Mammary epithelial cell (primary cell): ENCODE measurements at regions of chr10 and their contacts with region 1.

Region 1: DNA sequence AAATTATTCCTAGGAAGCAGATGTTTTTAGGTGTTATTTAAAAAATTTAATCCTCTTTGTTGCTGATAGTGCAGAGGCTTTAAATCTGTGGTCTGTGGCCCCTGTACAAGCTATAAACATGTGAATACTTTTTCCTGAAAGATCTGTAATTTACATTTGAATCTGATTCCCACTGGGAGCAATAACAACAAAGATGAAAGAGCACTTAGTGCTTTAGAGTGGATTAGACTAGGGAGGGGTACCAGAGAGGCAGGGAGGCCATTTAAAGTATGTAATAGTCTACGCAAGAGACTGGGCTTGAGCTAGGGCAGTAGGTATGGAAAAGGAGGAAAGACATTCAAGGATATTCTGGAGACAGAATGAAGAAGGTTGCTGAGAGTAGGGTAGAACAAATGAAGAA is 19.1 kb downstream of the BTRC start:
- DNase-seq: no peak
- H3K4me3 ChIP-seq: no peak overlapping the region
- H3K27ac ChIP-seq: no peak overlapping the region
- H3K4me1 ChIP-seq: peaks cover 2% of the 10 kb centered on the region
- H3K27me3 ChIP-seq: no peaks in the 10 kb centered on the region
- CTCF ChIP-seq: no peak

Region 2: GRCh38 chr10:101120884-101121653 is 252.0 kb before region 1 on chr10:
- CTCF ChIA-PET with region 1: no interaction called
- dilution Hi-C with region 1: no loop called
- in situ Hi-C with region 1: no loop called
- intact Hi-C with region 1: no loop called
- DNase-seq: no peak
- H3K4me3 ChIP-seq: peak overlapping the region; percentile 1 to 34 (median 32)
- H3K27ac ChIP-seq: no peak overlapping the region
- H3K4me1 ChIP-seq: peaks cover 26% of the 10 kb centered on the region
- H3K27me3 ChIP-seq: peaks cover 28% of the 10 kb centered on the region
- CTCF ChIP-seq: no peak

Region 3: DNA sequence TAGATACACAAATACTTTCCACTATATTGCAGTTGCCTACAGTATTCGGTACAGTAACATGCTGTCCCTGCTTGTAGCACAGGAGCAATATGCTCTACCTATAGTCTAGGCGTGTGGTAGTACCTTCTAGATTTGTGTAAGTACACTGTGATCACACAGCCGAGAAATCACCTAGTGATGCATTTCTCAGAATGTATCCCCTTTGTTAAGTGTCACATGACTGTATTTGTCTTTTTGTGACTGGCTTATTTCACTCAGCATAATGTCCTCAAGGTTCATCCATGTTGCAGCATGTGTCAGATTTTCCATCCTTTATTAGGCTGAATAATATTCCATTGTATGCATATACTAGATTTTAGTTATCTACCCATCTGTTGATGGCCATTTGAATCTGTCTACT is 42.8 kb after region 1 on chr10:
- CTCF ChIA-PET with region 1: no interaction called
- dilution Hi-C with region 1: loop called (anchors 5 kb)
- in situ Hi-C with region 1: no loop called
- intact Hi-C with region 1: no loop called
- DNase-seq: no peak
- H3K4me3 ChIP-seq: no peak overlapping the region
- H3K27ac ChIP-seq: no peak overlapping the region
- H3K4me1 ChIP-seq: no peaks in the 10 kb centered on the region
- H3K27me3 ChIP-seq: no peaks in the 10 kb centered on the region
- CTCF ChIP-seq: no peak